ENCODE measurements at regions of chr7 and their contacts with region 1.

Region 1: GRCh38 chr7:98280791-98281756 is at the start of gene BRI3:
- DNase-seq: peak; percentile 90
- H3K4me3 Mint-ChIP-seq: peak within 1 kb of the TSS; percentile 91
- H3K27ac Mint-ChIP-seq: peak within 1 kb of the TSS; percentile 87
- H3K4me1 Mint-ChIP-seq: peaks cover 23% of the 10 kb centered on the region
- H3K27me3 Mint-ChIP-seq: no peaks in the 10 kb centered on the region
- CTCF ChIP-seq: peak; percentile 9
- total RNA-seq, gene BRI3: 154 and 246 TPM in 2 replicates

Region 2: DNA sequence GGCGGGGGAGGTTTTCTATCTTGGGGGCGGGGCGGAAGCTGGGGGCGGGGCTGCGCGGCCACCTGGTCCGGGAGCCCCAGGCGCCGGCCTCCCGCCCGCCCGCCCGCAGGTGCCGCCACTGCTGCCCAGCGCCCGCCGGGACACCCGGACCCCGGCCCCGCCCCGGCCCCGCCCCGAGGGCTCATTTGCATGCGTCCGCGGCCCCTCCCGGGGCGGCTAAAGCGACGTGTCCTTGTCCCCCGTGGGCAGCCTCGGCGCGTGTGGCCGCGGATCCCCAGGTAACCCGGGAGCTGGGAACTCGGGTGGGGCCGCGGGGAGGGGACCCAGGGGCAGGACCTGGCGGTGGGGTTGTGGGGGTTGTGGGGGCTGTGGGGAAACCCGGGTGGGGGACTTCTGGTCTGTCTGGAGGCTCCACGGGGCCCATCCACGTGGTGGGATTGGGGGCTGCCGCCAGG is 69.8 kb before region 1 on chr7 and contains the start of gene BHLHA15:
- CTCF ChIA-PET with region 1: no interaction called
- POLR2A ChIA-PET with region 1: no interaction called
- intact Hi-C with region 1: no loop called
- DNase-seq: no peak
- H3K4me3 Mint-ChIP-seq: peak within 1 kb of the TSS; percentile 41
- H3K27ac Mint-ChIP-seq: no peak within 1 kb of the TSS
- H3K4me1 Mint-ChIP-seq: no peaks in the 10 kb centered on the region
- H3K27me3 Mint-ChIP-seq: no peaks in the 10 kb centered on the region
- CTCF ChIP-seq: no peak
- total RNA-seq, gene BHLHA15: 3.2 and 6.0 TPM in 2 replicates

Region 3: GRCh38 chr7:98251841-98252639 is 29.0 kb before region 1 on chr7 and contains the start of gene TECPR1:
- CTCF ChIA-PET with region 1: no interaction called
- POLR2A ChIA-PET with region 1: interaction called, 16 read pairs
- intact Hi-C with region 1: no loop called
- DNase-seq: peak; percentile 89
- H3K4me3 Mint-ChIP-seq: peak within 1 kb of the TSS; percentile 100
- H3K27ac Mint-ChIP-seq: peak within 1 kb of the TSS; percentile 96
- H3K4me1 Mint-ChIP-seq: peaks cover 5% of the 10 kb centered on the region
- H3K27me3 Mint-ChIP-seq: no peaks in the 10 kb centered on the region
- CTCF ChIP-seq: no peak
- total RNA-seq, gene TECPR1: 15.4 and 21.1 TPM in 2 replicates

Region 4: DNA sequence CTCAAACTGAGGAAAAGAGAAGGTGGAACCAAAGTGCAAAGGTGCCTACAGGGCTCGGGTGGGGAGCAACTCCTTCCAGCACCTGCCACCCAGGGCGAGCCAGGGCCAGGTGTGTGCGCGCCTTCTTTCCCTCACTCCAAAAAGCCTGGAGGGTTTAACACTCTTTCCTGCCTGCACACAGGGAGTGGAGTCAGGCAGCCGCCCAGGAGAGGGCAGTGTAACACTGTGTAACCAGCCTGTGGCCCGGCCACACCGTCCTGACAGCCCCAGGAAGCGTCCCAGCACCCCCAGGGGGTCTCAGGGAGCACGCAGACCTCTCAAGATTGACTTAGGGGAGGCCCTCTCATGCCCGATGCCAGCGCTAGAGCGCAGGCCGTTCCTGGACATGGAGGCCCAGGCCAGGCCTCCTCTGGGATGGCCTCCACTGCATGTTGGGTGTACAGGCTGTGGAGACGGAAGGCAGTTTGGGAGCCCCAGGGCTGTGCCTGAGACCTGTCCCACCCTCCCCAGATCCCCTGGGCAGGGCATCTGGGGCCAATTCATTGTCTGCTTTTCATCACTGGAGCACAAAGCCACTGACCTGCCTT is 13.8 kb after region 1 on chr7:
- CTCF ChIA-PET with region 1: interaction called, 11 read pairs
- POLR2A ChIA-PET with region 1: interaction called, 4 read pairs
- intact Hi-C with region 1: no loop called
- DNase-seq: peak; percentile 72
- H3K4me3 Mint-ChIP-seq: no peak overlapping the region
- H3K27ac Mint-ChIP-seq: peak overlapping the region; percentile 79
- H3K4me1 Mint-ChIP-seq: no peaks in the 10 kb centered on the region
- H3K27me3 Mint-ChIP-seq: no peaks in the 10 kb centered on the region
- CTCF ChIP-seq: peak; percentile 84

Measured in MCF 10A (cell line).